ENCODE measurements at regions of chr4 and their contacts with region 1.

Region 1: DNA sequence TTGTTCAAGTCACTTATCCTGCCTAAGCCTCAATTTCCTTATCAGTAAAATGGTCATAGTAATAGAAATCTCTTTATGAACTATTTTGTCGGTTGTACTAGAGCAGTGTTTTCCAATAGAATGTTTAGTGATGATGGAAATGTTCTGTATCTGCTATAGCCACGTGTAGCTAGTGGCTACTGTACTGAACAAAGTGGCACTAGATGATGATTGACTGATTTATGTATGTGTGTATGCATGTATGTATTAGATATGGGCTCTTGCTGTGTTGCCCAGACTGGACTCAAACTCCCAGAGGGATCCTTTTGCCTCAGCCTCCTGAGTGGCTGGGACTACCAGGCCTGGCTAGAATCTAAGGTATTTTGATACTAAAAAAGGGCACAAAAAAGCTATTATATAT is 24.7 kb upstream of the SLC9B1 start:
- DNase-seq: no peak
- H3K4me3 ChIP-seq: no peak overlapping the region
- CTCF ChIP-seq: no peak

Region 2: DNA sequence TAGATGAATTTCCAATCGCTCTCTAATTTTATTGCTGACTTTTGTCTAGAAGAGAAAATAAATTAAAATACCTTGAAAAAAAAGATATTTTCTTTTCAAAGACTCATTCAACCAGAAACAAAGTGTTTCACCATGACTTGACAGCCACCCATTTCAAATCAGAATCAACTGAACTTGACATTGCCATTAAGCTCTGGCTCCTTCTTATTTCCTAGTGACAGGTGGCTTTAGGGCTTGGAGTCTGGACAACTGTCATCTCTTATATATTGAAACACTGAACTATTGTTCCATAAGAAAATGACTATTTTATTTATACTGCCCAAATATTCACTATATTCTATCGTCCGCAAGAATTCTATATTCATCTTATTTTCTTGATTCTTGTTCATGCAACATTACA is 928.1 kb before region 1 on chr4:
- in situ Hi-C with region 1: no loop called
- DNase-seq: no peak
- H3K4me3 ChIP-seq: no peak overlapping the region
- CTCF ChIP-seq: no peak

Region 3: DNA sequence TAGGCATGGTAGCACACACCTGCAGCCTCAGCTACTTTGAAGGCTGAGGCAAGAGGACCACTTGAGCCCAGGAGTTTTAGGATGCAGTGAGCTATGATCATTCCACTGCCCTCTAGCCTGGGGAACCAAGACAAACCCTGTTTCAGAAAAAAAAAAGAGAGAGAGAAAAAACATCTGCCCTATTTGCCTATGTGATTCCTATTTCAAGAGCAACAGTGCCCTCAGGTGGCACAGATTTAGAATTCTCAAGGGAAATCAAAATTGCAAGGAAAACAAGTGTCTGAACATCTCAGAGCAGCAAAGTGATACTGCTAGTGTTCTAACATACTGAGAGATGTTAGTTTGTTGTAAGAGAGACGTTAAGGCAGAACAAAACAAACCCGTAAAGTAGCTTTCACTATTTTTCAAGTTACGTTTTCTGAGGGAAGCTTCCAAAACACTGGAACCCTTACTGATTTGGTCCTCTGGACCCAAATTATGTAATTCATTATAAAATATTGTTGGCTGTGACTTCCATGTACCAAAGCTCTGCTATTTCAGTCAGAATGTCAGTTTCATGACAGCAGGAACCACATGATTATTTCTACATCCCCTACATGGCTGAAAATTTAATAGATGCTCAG is 47.5 kb after region 1 on chr4:
- in situ Hi-C with region 1: loop called (anchors 5 kb)
- DNase-seq: peak; percentile 67
- H3K4me3 ChIP-seq: no peak overlapping the region
- CTCF ChIP-seq: peak; percentile 62

Region 4: GRCh38 chr4:103105558-103106356 is 61.6 kb after region 1 on chr4:
- in situ Hi-C with region 1: no loop called
- DNase-seq: no peak
- H3K4me3 ChIP-seq: no peak overlapping the region
- CTCF ChIP-seq: no peak